ENCODE measurements at regions of chr16 and their contacts with region 1.

Region 1: GRCh38 chr16:67999985-68000384 is 701 bp upstream of the DPEP2 start:
- DNase-seq: peak in 1 of 10 donors; percentile 30
- ATAC-seq: peak; percentile 14
- H3K4me3 Mint-ChIP-seq: peak overlapping the region; percentile 78 to 97 (median 88)
- H3K27ac Mint-ChIP-seq: peak overlapping the region; percentile 88 to 100 (median 96)
- H3K4me1 Mint-ChIP-seq: peaks cover 20 to 78% (median 58%) of the 10 kb centered on the region in 4 donors
- H3K27me3 Mint-ChIP-seq: no peaks in the 10 kb centered on the region

Region 2: GRCh38 chr16:67968400-67969253 is 31.4 kb before region 1 on chr16 and contains the start of gene SLC12A4:
- POLR2A ChIA-PET with region 1: interaction called, 10 read pairs
- DNase-seq: peak; percentile 78 to 92 (median 88)
- ATAC-seq: peak; percentile 87 to 90
- H3K4me3 Mint-ChIP-seq: peak within 1 kb of the TSS; percentile 87 to 99 (median 97)
- H3K27ac Mint-ChIP-seq: peak within 1 kb of the TSS; percentile 80 to 97 (median 92)
- H3K4me1 Mint-ChIP-seq: peaks cover 13 to 38% (median 32%) of the 10 kb centered on the region in 4 donors
- H3K27me3 Mint-ChIP-seq: no peaks in the 10 kb centered on the region
- polyA plus RNA-seq, gene SLC12A4: 3.0 to 5.6 (median 5.2) TPM

Region 3: GRCh38 chr16:68079626-68080344 is 79.8 kb after region 1 on chr16:
- POLR2A ChIA-PET with region 1: interaction called, 45 read pairs
- DNase-seq: peak; percentile 32 to 85 (median 68)
- ATAC-seq: peak; percentile 46 to 61
- H3K4me3 Mint-ChIP-seq: peak overlapping the region; percentile 66 to 86 (median 75)
- H3K27ac Mint-ChIP-seq: peak overlapping the region; percentile 86 to 97 (median 95)
- H3K4me1 Mint-ChIP-seq: peaks cover 57 to 92% (median 90%) of the 10 kb centered on the region in 4 donors
- H3K27me3 Mint-ChIP-seq: no peaks in the 10 kb centered on the region

Region 4: DNA sequence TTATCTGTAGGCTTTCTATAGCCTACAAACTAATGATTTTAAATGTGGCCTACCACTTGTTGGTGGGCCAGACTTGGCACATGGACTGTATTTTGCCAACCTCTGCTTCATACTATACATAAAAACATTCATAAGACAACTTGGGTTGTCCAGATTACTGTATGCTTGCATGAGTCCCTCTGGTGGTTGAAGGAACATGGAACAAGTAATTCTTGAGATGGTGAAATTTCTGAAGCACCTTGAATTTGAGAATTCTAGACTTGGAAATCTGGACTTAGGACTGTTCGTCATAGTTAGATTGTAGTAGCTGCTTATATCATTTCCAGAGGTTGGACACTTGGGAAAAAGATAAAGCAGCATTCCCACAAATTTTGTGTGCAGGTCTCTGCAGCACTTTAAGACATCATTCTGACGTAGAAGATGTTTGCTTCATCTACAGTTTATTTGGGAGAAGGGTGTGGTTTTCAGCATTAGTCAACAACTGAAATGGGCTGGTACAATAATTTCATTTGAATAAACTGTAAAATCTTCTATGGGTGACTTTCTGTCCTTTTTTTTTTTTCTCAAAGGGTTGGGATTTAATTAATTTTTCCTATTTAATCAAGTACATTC is 116.4 kb after region 1 on chr16:
- POLR2A ChIA-PET with region 1: no interaction called
- DNase-seq: peak in 3 of 10 donors; percentile 5 to 39 (median 31)
- ATAC-seq: peak; percentile 62 to 72
- H3K4me3 Mint-ChIP-seq: peak overlapping the region in 9 of 10 donors; percentile 12 to 57 (median 41)
- H3K27ac Mint-ChIP-seq: peak overlapping the region; percentile 16 to 88 (median 64)
- H3K4me1 Mint-ChIP-seq: peaks cover 40 to 96% (median 83%) of the 10 kb centered on the region in 4 donors
- H3K27me3 Mint-ChIP-seq: no peaks in the 10 kb centered on the region

Measured in naive thymus-derived CD8-positive, alpha-beta T cell (primary cell).